ENCODE measurements at regions of chr9 and their contacts with region 1.

Region 1: DNA sequence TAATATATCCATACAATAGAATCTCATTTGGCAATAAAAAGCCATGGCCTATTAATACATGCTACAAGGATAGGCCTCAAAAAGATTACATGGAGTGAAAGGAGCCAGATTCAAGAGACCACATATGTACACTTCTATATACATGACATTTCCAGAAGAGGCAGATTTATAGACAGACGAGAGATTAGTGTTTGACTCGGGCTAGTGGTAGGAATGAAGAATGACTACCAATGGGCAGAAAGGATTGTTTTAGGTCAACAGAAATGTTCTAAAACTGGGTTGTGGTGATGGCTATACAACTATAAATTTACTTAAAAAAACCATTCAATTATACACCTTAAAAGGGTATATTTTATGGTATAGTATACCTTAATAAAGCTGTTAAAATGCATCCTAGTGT is 41.9 kb downstream of the SETX start:
- DNase-seq: no peak
- CTCF ChIP-seq: no peak

Region 2: DNA sequence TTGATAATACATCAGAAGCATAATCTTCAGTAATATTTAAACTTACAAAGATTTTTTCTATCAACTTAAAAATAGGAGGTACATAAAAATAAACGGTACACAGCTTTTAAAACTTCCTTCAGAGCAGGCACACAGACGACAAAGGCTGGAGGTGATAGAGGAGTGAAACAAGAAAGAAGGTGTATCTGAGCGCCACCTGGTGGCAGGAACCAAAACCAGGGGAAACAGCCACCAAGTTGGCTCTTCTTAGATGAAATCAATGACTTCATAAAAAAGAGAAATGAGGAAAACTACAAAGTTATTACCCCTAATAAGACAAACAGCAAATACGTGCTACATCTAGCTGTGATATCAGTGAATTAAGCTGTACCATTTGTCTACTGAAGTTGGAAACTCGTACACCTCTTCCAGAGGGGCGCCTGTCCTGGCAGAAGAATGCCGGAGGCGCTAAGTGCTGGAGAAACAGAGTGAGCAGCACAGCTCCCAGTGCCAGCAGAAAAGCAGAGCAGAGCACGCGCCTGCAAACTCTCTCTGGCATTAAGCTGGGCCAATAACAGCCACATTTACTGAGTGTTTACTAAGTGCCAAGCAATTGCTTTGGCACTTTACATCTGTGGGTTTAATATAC is 44.0 kb before region 1 on chr9:
- CTCF ChIA-PET with region 1: interaction called, 10 read pairs
- POLR2A ChIA-PET with region 1: no interaction called
- DNase-seq: peak; percentile 60
- CTCF ChIP-seq: peak; percentile 82